ENCODE measurements at regions of chr14 and their contacts with region 1.

Region 1: DNA sequence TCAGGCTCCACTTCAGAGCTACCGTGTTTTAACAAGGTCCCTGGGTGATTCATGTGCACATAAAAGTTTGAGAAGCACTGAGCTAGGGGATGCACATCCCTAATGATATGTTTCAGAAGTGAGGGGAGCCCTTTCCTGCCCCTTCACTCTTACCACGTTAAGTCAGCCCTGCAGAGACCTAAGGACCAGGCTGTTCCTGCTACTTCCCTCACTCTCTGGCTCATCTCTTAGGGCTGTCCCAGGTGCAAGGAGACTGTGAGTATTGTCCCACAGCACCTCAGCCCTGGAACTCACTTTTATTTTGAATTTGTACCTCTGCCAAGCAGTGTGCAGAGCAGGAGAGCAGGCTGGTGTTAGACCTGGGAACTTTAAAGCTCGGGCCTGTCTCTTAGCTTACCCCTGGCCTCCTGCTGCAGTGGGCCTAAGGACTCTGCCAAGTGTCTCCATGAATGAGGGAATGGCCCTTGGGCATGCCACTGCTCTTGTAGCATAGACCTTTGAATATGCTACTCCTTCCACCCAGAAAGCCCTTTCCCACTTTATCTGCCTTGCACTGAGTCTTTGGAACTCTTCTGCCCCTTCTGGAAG is 11.0 kb upstream of the SUSD6 start:
- DNase-seq: no peak
- ATAC-seq: no peak
- H3K4me3 ChIP-seq: no peak overlapping the region
- H3K4me3 Mint-ChIP-seq: no peak overlapping the region
- H3K27ac ChIP-seq: no peak overlapping the region
- H3K27ac Mint-ChIP-seq: no peak overlapping the region
- H3K4me1 ChIP-seq: no peaks in the 10 kb centered on the region
- H3K4me1 Mint-ChIP-seq: no peaks in the 10 kb centered on the region
- H3K27me3 ChIP-seq: no peaks in the 10 kb centered on the region
- H3K27me3 Mint-ChIP-seq: no peaks in the 10 kb centered on the region
- CTCF ChIP-seq: no peak

Region 2: DNA sequence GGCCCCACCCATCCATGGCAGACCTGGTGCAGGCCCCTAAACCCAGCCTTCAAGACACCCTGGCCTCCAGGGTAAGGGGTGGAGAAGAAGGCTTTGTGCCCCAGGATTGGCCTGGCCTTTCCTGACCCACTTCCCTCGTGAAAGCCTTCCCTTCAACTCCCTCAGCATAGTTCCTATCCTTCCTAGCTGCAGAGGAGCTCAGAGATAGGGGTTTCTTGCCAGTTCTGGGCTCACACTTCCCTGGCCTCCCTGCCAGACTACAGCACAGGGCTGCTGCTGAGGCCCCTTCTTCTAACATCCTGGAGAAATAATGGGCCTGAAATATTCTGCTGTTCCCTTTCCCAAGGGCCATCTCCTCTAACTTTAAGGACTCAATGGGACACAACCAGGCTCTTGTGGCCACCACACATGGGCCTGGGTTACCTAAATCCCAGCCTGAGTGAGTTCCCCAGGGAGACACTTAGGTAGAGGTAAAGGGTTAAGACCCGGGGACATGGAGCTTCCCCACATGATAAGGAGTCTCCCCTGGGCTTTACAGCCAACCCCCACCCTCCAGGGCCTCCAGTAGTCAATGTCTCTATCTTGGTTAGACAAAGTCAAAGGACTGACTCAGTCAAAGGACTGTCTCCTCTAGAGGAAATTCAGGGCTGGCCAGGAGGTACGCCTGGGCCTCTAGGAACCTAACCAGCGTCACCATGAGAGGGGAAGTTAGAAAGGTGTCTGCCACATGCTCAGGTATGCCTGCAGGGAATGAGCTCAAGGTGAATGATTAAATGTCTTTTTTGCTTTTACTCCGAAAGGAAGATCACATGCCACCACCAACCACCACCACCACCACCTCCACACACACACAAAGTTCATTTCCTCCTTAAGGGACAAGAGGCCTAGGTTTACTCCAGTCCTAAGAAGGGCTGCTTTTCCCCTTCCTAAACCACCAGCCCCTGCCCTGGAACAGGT is 814.6 kb before region 1 on chr14:
- CTCF ChIA-PET with region 1: no interaction called
- POLR2A ChIA-PET with region 1: no interaction called
- intact Hi-C with region 1: no loop called
- DNase-seq: peak in 6 of 9 experiments; percentile 38 to 74 (median 68)
- ATAC-seq: peak; percentile 28
- H3K4me3 ChIP-seq: no peak overlapping the region
- H3K4me3 Mint-ChIP-seq: peak overlapping the region; percentile 74
- H3K27ac ChIP-seq: peak overlapping the region; percentile 20 to 66
- H3K27ac Mint-ChIP-seq: peak overlapping the region; percentile 94
- H3K4me1 ChIP-seq: peaks cover 81% of the 10 kb centered on the region
- H3K4me1 Mint-ChIP-seq: peaks cover 85% of the 10 kb centered on the region
- H3K27me3 ChIP-seq: no peaks in the 10 kb centered on the region
- H3K27me3 Mint-ChIP-seq: no peaks in the 10 kb centered on the region
- CTCF ChIP-seq: no peak

Region 3: DNA sequence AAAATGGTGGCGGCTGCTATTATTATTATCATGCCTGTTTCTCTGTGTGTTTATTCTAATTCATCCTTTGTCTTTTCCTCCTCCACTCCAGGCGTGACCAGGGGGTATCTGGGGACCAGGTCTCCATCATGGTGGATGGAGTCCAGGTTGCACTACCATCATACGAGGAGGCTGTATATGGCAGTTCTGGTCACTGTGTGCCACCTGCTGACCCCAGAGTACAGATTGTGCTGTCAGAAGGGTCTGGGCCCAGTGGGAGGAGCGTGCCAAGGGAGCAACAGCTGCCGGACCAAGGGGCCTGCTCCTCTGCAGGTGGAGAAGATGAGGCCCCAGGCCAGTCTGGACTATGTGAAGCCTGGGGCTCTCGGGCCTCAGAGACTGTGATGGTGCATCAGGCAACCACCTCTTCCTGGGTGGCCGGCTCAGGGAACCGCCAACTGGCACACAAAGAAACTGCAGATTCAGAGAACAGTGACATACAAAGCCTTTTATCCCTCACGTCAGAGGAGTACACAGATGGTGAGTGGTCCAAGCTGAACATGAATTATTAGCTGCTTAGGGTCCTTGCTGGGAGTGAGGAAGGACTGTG is 108.3 kb after region 1 on chr14:
- CTCF ChIA-PET with region 1: interaction called, 7 read pairs
- POLR2A ChIA-PET with region 1: no interaction called
- intact Hi-C with region 1: loop called in 1 of 2 experiments (anchors 5 kb)
- DNase-seq: peak in 2 of 9 experiments; percentile 30 to 32
- ATAC-seq: no peak
- H3K4me3 ChIP-seq: no peak overlapping the region
- H3K4me3 Mint-ChIP-seq: no peak overlapping the region
- H3K27ac ChIP-seq: no peak overlapping the region
- H3K27ac Mint-ChIP-seq: no peak overlapping the region
- H3K4me1 ChIP-seq: peaks cover 9% of the 10 kb centered on the region
- H3K4me1 Mint-ChIP-seq: peaks cover 19% of the 10 kb centered on the region
- H3K27me3 ChIP-seq: no peaks in the 10 kb centered on the region
- H3K27me3 Mint-ChIP-seq: no peaks in the 10 kb centered on the region
- CTCF ChIP-seq: no peak

Measured in CD8-positive, alpha-beta T cell (primary cell).